Tibial artery (tissue), 4 donors: ENCODE measurements at regions of chr12 and their contacts with region 1.

Region 1: GRCh38 chr12:78739653-78740052 is 124.9 kb upstream of the SYT1 start:
- DNase-seq: no peak
- H3K4me3 ChIP-seq: no peak overlapping the region
- H3K27ac ChIP-seq: no peak overlapping the region
- H3K4me1 ChIP-seq: no peaks in the 10 kb centered on the region
- H3K27me3 ChIP-seq: no peaks in the 10 kb centered on the region
- CTCF ChIP-seq: no peak

Region 2: DNA sequence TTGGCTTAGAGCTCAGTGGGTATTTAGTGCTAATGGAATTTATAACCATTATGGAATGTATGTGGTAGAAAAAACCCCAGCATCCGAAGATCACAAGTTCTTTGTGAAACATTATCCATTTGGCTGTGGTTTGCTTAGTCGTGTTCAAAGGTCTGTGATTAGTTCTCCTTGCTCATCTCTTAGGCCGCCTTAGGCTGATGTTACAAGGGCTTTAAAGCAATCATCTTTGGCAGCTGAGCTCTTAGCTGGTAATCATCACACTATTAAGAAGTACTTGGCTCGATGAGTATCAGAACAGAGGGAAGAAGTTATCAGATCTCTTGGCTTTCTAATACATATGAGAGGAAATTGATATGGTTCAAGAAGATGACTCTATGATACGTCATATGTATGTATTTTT is 1550.2 kb before region 1 on chr12:
- intact Hi-C with region 1: loop called (anchors 5 kb)
- DNase-seq: no peak
- H3K4me3 ChIP-seq: no peak overlapping the region
- H3K27ac ChIP-seq: no peak overlapping the region
- H3K4me1 ChIP-seq: no peaks in the 10 kb centered on the region
- H3K27me3 ChIP-seq: no peaks in the 10 kb centered on the region
- CTCF ChIP-seq: no peak